Right ventricle myocardium inferior (tissue), 1 donor: ENCODE measurements at regions of chr1 and their contacts with region 1.

Region 1: GRCh38 chr1:101136739-101137138 is 100.1 kb upstream of the S1PR1 start:
- DNase-seq: no peak
- ATAC-seq: no peak

Region 2: DNA sequence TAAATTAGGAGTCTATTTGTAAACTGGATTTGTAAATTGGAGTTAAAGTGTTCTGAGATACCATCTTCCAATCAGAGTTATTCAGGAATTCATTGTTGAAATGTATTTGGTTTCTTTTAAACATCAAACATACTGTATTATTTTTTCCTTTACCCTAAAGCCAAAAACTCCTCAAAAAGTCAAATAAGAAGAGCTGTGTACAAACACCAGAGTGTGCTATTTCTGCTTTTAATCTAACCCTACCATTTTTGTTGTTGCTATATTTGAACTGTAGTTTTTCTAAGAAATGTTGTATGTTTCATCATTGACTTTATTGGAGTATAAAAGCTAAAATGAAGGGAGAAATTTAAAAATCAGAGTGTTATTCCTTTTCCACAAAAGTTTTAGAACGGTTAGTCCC is 205.0 kb before region 1 on chr1:
- intact Hi-C with region 1: loop called (anchors 10 kb)
- DNase-seq: no peak
- ATAC-seq: no peak

Region 3: DNA sequence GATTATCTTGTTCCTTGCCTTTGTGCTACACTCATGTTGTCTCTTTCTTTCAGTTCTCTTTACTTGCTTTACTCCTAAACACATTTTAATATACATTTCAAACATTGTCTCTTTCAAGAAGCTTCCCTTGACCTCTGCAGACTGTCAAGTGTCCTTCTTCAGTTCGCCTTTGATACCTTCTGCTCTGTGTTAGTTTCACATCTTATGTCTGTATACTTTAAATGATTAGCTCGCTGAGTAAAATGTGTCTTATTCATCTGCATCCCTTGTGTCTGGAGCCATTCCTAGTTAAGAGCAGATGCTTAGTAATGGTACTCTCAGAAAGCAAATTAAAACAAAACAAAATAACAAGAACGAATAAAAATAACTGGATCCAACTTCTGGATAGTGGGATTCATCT is 403.4 kb after region 1 on chr1:
- intact Hi-C with region 1: no loop called
- DNase-seq: no peak
- ATAC-seq: no peak